Colonic mucosa (tissue), 4 donors: ENCODE measurements at regions of chr20 and their contacts with region 1.

Region 1: DNA sequence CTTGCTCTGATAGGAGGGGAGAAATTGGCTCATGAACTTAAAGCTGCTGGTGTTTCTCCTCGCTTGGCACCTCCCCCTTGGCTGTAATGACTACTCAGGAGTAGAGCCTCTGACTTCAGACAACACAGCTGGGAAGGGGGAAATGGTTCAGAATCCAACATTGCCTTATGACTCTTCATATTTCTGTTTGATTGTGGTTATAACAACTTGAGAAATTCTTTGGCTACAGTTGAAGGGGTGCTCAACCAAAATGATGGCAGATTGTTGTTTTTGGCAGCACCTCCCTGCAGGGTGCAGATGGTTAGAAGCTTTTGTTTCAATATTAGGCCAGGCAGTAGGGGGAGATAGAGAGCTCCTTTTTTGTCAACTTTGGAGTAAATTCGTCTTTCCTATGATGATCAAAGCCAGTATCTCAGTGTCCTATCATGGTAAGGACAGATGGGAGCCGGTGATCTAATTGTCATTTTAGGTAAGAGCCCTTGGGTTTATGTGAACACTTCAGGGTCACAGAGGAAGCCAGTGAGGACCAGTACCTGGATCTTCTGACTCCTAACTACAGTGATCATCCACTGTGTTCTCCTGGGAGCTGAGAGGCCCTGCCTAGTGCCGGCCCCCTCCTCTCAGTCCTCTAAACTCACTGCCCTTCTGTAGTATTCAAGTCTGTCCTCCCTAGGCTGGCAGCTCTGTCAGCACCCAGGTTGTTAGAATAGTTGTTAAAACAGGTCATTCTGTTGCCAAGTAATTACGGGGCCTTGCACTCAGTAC is 39.9 kb downstream of the RPRD1B start:
- DNase-seq: peak; percentile 74
- H3K4me3 ChIP-seq: no peak overlapping the region
- H3K27ac ChIP-seq: peak overlapping the region; percentile 49
- H3K4me1 ChIP-seq: no peaks in the 10 kb centered on the region
- H3K27me3 ChIP-seq: no peaks in the 10 kb centered on the region
- CTCF ChIP-seq: peak; percentile 74

Region 2: GRCh38 chr20:38321959-38322598 is 248.6 kb after region 1 on chr20:
- intact Hi-C with region 1: loop called (anchors 10 kb)
- DNase-seq: no peak
- H3K4me3 ChIP-seq: no peak overlapping the region
- H3K27ac ChIP-seq: no peak overlapping the region
- H3K4me1 ChIP-seq: no peaks in the 10 kb centered on the region
- H3K27me3 ChIP-seq: no peaks in the 10 kb centered on the region
- CTCF ChIP-seq: peak; percentile 42